ENCODE measurements at regions of chr14 and their contacts with region 1.

Region 1: GRCh38 chr14:61837336-61838229 is 75.4 kb downstream of the SNAPC1 start:
- DNase-seq: peak; percentile 80
- ATAC-seq: peak; percentile 98
- H3K4me3 ChIP-seq: no peak overlapping the region
- H3K27ac ChIP-seq: no peak overlapping the region
- H3K4me1 ChIP-seq: no peaks in the 10 kb centered on the region
- H3K27me3 ChIP-seq: no peaks in the 10 kb centered on the region
- CTCF ChIP-seq: peak; percentile 78 to 96 (median 84); a peak in 5 of 6 replicates
- POLR2A ChIP-seq: no peak
- RAD21 ChIP-seq: peak; percentile 95

Region 2: DNA sequence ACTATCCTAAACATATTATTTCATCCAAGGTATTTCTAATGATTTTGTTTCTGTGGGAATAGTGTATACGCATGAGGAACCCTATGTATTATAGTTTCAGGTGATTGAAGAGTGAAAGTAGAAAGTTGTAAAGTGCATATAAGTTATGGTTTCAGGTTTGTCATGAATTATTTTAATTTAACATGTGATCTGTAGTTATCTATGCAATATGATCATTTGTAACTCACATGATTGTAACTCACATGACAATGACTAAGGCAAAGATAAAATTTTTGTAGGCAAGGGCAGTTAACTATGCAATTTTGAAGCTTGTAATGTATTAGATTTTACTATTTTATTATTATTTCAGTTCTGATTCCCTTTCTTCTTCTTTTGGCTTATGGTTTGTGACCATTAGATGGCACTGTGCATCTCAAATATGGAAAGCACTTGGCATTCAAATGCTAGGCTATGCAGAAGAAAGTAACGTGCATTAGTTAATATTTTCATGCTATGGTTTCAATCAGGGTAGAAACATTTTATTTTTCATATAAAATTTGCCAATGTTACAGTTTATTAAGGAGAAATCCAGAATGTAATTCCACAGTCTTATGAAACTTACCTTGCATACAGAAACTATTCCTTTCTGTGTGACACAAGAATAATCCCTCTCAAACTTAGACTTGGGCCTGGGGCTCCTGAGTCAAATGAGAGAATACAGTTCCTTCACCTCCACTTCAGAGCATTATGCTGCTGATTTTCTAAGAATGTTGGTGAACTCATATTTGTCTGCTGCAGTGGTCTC is 540.7 kb before region 1 on chr14:
- CTCF ChIA-PET with region 1: interaction called, 7 read pairs
- POLR2A ChIA-PET with region 1: no interaction called
- RAD21 ChIA-PET with region 1: no interaction called
- intact Hi-C with region 1: loop called (anchors 1 kb)
- DNase-seq: peak; percentile 27
- ATAC-seq: peak; percentile 67
- H3K4me3 ChIP-seq: no peak overlapping the region
- H3K27ac ChIP-seq: no peak overlapping the region
- H3K4me1 ChIP-seq: no peaks in the 10 kb centered on the region
- H3K27me3 ChIP-seq: no peaks in the 10 kb centered on the region
- CTCF ChIP-seq: peak; percentile 64 to 73 (median 68); a peak in 5 of 6 replicates
- POLR2A ChIP-seq: no peak
- RAD21 ChIP-seq: peak; percentile 82

Region 3: GRCh38 chr14:61461808-61462275 is 375.7 kb before region 1 on chr14:
- CTCF ChIA-PET with region 1: interaction called, 12 read pairs
- POLR2A ChIA-PET with region 1: no interaction called
- RAD21 ChIA-PET with region 1: interaction called in 1 of 2 experiments, 6 read pairs
- intact Hi-C with region 1: loop called (anchors 1 kb)
- DNase-seq: peak; percentile 34
- ATAC-seq: peak; percentile 70
- H3K4me3 ChIP-seq: no peak overlapping the region
- H3K27ac ChIP-seq: no peak overlapping the region
- H3K4me1 ChIP-seq: peaks cover 0 to 7% of the 10 kb centered on the region in 2 experiments; a peak in 2 of 4 replicates
- H3K27me3 ChIP-seq: no peaks in the 10 kb centered on the region
- CTCF ChIP-seq: peak; percentile 60 to 83 (median 69); a peak in 5 of 6 replicates
- POLR2A ChIP-seq: no peak
- RAD21 ChIP-seq: peak; percentile 83

Region 4: DNA sequence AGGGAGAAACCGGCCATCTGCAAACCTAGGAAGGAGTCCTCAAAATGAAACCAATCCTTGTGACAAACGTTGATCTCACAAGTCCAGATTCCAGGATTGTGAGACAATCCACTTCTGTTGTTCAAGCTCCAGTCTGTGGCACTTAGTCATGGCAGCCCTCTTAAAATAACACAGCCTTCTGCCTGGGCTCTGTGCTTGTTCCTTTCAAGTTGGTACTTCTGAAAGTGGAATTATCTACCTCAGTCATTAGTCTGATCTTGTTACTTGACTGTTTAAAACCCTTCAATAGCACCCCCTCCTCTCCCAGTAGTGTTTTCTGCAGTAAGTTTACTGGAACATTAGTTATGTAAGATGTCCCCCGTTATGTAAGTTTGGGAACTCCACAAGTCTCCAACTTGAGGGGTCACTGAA is 253.2 kb before region 1 on chr14:
- CTCF ChIA-PET with region 1: no interaction called
- POLR2A ChIA-PET with region 1: no interaction called
- RAD21 ChIA-PET with region 1: no interaction called
- intact Hi-C with region 1: no loop called
- DNase-seq: no peak
- ATAC-seq: no peak
- H3K4me3 ChIP-seq: no peak overlapping the region
- H3K27ac ChIP-seq: no peak overlapping the region
- H3K4me1 ChIP-seq: peaks cover 0 to 12% of the 10 kb centered on the region in 2 experiments; a peak in 2 of 4 replicates
- H3K27me3 ChIP-seq: no peaks in the 10 kb centered on the region
- CTCF ChIP-seq: no peak
- POLR2A ChIP-seq: no peak
- RAD21 ChIP-seq: no peak

Region 5: GRCh38 chr14:61730756-61731373 is 106.7 kb before region 1 on chr14:
- CTCF ChIA-PET with region 1: interaction called, 5 read pairs
- POLR2A ChIA-PET with region 1: no interaction called
- RAD21 ChIA-PET with region 1: interaction called in 1 of 2 experiments, 5 read pairs
- intact Hi-C with region 1: loop called (anchors 10 kb)
- DNase-seq: no peak
- ATAC-seq: no peak
- H3K4me3 ChIP-seq: no peak overlapping the region
- H3K27ac ChIP-seq: no peak overlapping the region
- H3K4me1 ChIP-seq: no peaks in the 10 kb centered on the region
- H3K27me3 ChIP-seq: no peaks in the 10 kb centered on the region
- CTCF ChIP-seq: peak; percentile 30 to 51 (median 41); a peak in 4 of 6 replicates
- POLR2A ChIP-seq: no peak
- RAD21 ChIP-seq: peak; percentile 61

Region 6: GRCh38 chr14:61761959-61762786 is 75.4 kb before region 1 on chr14 and contains the start of gene SNAPC1:
- CTCF ChIA-PET with region 1: interaction called, 11 read pairs
- POLR2A ChIA-PET with region 1: no interaction called
- RAD21 ChIA-PET with region 1: interaction called, 3 read pairs
- intact Hi-C with region 1: no loop called
- DNase-seq: peak; percentile 93
- ATAC-seq: peak; percentile 99
- H3K4me3 ChIP-seq: peak within 1 kb of the TSS; percentile 91 to 95
- H3K27ac ChIP-seq: peak within 1 kb of the TSS; percentile 53
- H3K4me1 ChIP-seq: peaks cover 5 to 16% of the 10 kb centered on the region in 2 experiments; a peak in 3 of 4 replicates
- H3K27me3 ChIP-seq: no peaks in the 10 kb centered on the region
- CTCF ChIP-seq: no peak
- POLR2A ChIP-seq: peak; percentile 78
- RAD21 ChIP-seq: no peak
- total RNA-seq, gene SNAPC1: 8.2 TPM